SK-N-SH (cell line): ENCODE measurements at regions of chr17 and their contacts with region 1.

Region 1: DNA sequence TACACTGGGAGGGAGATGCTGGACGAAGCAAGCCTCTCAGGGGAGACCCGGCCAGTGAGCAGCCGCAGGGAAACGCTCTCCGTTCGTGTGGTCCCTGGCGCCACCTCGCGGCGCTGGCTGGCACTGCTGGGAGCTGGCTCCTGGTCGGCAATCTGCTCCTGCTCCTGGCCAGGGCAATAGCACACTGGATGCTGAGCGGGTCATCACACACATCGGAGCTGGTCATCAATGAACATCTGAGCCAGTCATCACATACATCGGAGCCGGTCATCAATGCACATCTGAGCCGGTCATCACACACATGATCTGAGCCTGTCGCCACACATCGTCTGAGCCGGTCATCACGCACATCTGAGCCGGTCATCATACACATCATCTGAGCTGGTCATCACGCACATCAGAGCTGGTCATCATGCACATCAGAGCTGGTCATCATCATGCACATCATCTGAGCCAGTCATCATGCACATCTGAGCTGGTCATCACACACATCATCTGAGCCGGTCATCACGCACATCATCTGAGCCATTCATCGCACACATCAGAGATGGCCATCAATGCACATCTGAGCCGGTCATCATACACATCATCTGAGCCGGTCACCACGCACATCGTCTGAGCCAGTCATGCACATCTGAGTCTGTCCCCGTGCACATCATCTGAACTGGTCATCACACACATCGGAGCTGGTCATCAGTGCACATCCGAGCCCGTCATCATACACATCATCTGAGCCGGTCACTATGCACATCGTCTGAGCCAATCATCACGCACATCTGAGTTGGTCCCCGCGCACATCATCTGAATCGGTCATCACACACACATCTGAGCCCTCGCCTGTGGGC is 217.3 kb downstream of the RBFOX3 start:
- DNase-seq: peak; percentile 97
- H3K4me3 ChIP-seq: no peak overlapping the region; a peak in 1 of 4 replicates
- H3K27ac ChIP-seq: no peak overlapping the region
- H3K4me1 ChIP-seq: no peaks in the 10 kb centered on the region; a peak in 1 of 4 replicates
- H3K27me3 ChIP-seq: peaks cover 64% of the 10 kb centered on the region
- CTCF ChIP-seq: peak; percentile 97
- EP300 ChIP-seq: no peak
- RAD21 ChIP-seq: peak; percentile 97

Region 2: GRCh38 chr17:79055197-79055596 is 338.4 kb before region 1 on chr17:
- CTCF ChIA-PET with region 1: interaction called, 221 read pairs
- POLR2A ChIA-PET with region 1: no interaction called
- DNase-seq: no peak
- H3K4me3 ChIP-seq: no peak overlapping the region
- H3K27ac ChIP-seq: no peak overlapping the region
- H3K4me1 ChIP-seq: no peaks in the 10 kb centered on the region
- H3K27me3 ChIP-seq: no peaks in the 10 kb centered on the region
- CTCF ChIP-seq: no peak
- EP300 ChIP-seq: no peak
- RAD21 ChIP-seq: no peak

Region 3: DNA sequence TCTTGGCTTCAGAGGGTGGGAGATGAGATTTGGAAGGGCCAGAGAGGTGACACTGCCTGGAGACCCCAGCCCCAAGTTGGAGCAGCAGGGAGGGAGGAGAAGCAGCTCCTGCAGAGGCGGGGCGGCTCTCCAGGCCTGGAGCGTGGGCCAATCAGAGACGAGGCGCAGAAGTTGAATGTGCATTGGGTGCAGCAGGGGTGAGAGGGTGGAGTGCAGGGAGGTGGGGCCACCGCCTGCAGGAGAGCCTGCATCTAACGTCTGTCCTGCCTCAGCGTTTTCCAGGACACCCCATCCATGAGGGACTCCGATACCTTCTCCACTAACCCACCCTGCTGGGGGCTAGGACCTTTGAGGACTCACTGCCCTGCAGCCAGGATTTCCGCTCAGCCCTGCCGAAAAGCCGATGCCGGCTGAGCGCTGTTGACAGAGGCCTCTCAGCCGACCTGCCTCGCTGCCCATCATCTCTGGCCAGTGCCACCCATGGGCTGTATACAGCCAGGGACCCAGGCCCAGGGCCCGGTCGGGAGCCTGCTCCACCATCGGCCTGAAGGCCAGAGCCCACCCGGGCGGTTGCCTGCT is 172.8 kb before region 1 on chr17:
- CTCF ChIA-PET with region 1: interaction called, 121 read pairs
- POLR2A ChIA-PET with region 1: no interaction called
- DNase-seq: no peak
- H3K4me3 ChIP-seq: no peak overlapping the region
- H3K27ac ChIP-seq: no peak overlapping the region
- H3K4me1 ChIP-seq: peaks cover 0 to 35% of the 10 kb centered on the region in 2 experiments; a peak in 2 of 4 replicates
- H3K27me3 ChIP-seq: peaks cover 9% of the 10 kb centered on the region; the same call in 1 of the 2 replicates
- CTCF ChIP-seq: no peak
- EP300 ChIP-seq: no peak
- RAD21 ChIP-seq: no peak

Region 4: GRCh38 chr17:79305768-79306423 is 87.7 kb before region 1 on chr17:
- CTCF ChIA-PET with region 1: interaction called, 12 read pairs
- POLR2A ChIA-PET with region 1: no interaction called
- DNase-seq: peak; percentile 95
- H3K4me3 ChIP-seq: no peak overlapping the region
- H3K27ac ChIP-seq: peak overlapping the region in 1 of 2 experiments; percentile 91; a peak in 2 of 4 replicates
- H3K4me1 ChIP-seq: peaks cover 0 to 24% of the 10 kb centered on the region in 2 experiments; a peak in 2 of 4 replicates
- H3K27me3 ChIP-seq: 0 out of 2 replicates have a peak, but pooled peaks cover 9% of the 10 kb centered on the region
- CTCF ChIP-seq: no peak
- EP300 ChIP-seq: peak in 1 of 2 experiments; percentile 65; a peak in 2 of 4 replicates
- RAD21 ChIP-seq: no peak

Region 5: DNA sequence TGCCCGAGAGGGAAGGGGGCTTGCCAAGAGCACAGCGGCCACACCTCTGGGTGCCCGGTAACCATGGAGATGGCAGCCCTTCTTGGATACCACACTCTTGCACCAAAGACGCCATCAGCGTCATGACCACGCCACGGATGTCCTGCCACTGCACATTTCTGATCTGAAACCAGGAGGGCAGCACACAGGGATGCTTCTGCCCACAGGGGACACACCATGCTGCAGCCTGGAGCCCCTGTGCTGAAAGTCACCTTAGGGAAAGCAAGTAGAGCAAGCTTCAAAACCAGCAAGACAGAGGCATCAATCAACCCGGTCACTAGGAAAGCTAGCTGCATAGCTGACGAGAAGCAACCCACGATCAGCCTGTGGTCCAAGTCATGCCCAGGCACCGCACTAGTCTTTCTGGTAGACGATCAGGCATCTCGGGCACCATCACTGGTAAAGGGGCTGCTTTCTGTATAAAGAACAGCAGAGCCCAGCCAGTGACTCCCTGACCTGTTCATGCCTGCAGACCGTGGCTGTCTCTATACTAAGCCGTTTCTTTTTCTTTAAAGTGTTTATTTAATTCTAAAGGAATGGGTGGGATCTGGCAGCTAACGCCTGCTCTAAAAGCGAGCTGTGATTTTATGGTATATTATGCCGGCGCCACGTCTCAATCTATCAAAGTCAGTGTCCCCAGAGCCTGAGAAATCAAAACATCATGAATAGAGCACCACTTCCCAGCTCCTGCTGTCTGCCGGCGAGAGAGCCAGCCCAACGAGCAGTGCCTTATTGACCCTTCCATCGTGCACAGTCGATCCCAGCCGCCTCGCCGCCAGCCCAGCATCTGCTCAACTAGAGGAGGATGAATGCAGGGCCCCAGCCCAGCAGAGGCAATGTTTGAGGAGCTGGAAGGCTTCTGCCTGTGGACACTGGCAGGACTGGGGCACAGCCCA is 27.5 kb before region 1 on chr17:
- CTCF ChIA-PET with region 1: interaction called, 37 read pairs
- POLR2A ChIA-PET with region 1: no interaction called
- DNase-seq: no peak
- H3K4me3 ChIP-seq: no peak overlapping the region
- H3K27ac ChIP-seq: no peak overlapping the region
- H3K4me1 ChIP-seq: no peaks in the 10 kb centered on the region; a peak in 1 of 4 replicates
- H3K27me3 ChIP-seq: peaks cover 34% of the 10 kb centered on the region; the same call in 1 of the 2 replicates
- CTCF ChIP-seq: no peak
- EP300 ChIP-seq: no peak
- RAD21 ChIP-seq: no peak

Region 6: DNA sequence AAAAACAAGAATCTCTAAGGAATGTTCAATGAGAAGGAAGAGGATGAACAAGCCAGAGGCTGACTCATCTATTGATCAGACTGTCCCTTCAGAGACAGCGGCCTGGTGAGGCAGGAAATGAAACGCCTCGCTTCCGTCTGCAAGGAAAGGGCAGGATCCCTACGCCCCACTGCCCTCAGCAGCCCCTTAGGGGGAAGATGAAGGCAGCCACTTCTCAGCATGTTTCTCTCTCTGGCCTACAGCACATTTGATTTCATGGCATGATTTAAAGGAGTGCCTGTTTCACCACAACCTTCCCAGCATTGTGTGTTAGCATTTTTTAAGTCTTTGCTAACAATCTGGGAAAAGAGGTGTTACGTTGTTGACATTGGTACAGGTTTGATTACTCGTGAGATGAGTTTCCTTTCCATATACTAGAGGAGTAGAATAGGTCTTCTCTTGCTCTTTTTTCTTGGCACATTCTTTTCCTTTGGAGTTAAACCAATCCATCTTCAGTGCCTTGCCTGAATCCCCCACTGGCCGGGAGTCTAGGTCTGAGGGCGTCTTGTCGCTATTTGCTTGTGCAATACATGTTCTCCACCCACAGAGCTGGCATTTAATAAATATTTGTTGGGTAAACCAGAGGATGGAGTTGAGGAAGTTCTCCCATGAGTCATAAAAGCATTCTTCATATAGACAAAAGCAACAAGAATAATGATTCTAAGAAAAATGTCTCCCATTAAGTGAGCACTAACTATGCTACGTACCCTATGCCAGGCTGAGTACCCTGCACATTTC is 169.8 kb after region 1 on chr17:
- CTCF ChIA-PET with region 1: interaction called, 11 read pairs
- POLR2A ChIA-PET with region 1: no interaction called
- DNase-seq: no peak
- H3K4me3 ChIP-seq: no peak overlapping the region
- H3K27ac ChIP-seq: no peak overlapping the region
- H3K4me1 ChIP-seq: peaks cover 0 to 17% of the 10 kb centered on the region in 2 experiments; a peak in 1 of 4 replicates
- H3K27me3 ChIP-seq: peaks cover 17% of the 10 kb centered on the region; the same call in 1 of the 2 replicates
- CTCF ChIP-seq: no peak
- EP300 ChIP-seq: no peak
- RAD21 ChIP-seq: no peak

Region 7: DNA sequence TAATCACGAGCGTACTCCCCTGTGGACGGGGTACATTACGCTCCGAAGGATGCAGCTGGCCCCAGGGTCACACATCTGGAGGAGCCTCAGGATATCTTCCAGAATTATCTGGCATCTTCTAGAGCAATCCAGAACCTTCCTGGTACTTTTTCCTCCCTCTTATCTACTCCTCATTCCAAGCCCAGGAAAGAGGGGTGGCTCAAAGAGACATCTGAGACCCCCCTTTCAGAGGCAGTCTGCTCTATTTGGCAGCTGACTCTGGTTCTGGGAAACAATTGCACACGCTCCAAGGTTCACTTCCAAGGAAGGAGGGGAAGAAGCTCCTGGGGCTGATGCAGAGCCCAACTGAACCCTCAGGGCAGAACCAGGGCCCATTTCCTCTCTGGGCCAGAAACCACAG is 202.3 kb after region 1 on chr17:
- CTCF ChIA-PET with region 1: no interaction called
- POLR2A ChIA-PET with region 1: no interaction called
- DNase-seq: no peak
- H3K4me3 ChIP-seq: no peak overlapping the region
- H3K27ac ChIP-seq: no peak overlapping the region
- H3K4me1 ChIP-seq: peaks cover 0 to 6% of the 10 kb centered on the region in 2 experiments; a peak in 1 of 4 replicates
- H3K27me3 ChIP-seq: peaks cover 41% of the 10 kb centered on the region
- CTCF ChIP-seq: no peak
- EP300 ChIP-seq: no peak
- RAD21 ChIP-seq: no peak